ENCODE measurements at regions of chr5 and their contacts with region 1.

Region 1: DNA sequence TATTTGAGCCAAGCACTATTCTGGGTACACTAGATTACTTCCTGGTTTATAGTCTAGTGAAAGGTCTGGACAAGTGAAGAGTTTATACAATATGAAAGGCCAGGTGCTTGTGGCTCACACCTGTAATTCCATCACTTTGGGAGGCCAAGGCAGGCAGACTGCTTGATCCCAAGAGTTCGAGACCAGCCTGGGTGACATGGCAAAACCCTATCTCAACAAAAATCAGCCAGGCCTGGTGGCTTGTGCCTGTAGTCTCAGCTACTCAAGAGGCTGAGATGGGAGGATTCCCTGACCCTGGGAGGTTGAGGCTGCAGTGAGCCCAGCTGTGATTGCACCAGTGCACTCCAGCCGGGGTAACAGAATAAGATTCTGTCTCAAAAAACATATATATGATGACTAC is 9.5 kb upstream of the TXNDC15 start:
- DNase-seq: no peak
- H3K4me3 ChIP-seq: no peak overlapping the region
- H3K27ac ChIP-seq: no peak overlapping the region
- H3K4me1 ChIP-seq: no peaks in the 10 kb centered on the region
- H3K27me3 ChIP-seq: no peaks in the 10 kb centered on the region
- CTCF ChIP-seq: no peak
- EP300 ChIP-seq: no peak
- POLR2A ChIP-seq: no peak
- RAD21 ChIP-seq: no peak

Region 2: DNA sequence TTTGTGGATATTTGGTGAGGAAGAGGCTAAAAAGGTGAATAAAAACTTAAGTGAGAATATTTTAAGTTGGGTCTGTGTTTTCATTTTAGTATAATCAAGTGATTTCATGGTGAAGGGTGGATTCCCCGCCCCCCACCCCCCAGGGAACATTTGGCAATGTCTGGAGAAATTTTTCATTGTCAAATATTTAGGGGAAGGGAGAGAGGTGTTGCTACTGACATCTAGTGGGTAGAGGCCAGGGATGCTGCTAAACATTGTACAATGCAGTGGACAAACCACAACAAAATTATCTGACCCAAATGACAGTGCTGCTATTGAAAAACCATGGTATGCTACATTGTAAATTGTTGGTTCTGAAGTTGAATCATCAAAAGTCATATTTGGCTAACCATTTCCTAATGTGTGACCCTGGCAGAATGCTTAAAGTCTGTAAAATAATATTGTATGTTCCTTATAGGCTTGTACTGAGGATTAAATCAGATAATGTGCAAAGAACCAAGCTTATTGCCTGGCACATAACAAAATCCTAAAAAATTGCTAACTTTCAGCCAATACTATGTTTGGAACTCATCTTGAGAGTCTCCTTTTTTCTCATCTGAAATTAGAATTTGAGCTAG is 13.3 kb before region 1 on chr5:
- CTCF ChIA-PET with region 1: interaction called, 37 read pairs
- POLR2A ChIA-PET with region 1: interaction called, 6 read pairs
- DNase-seq: peak in 1 of 2 experiments; percentile 24
- H3K4me3 ChIP-seq: no peak overlapping the region
- H3K27ac ChIP-seq: no peak overlapping the region
- H3K4me1 ChIP-seq: no peaks in the 10 kb centered on the region
- H3K27me3 ChIP-seq: no peaks in the 10 kb centered on the region
- CTCF ChIP-seq: peak in 2 of 3 experiments; percentile 24 to 37; a peak in 2 of 4 replicates
- EP300 ChIP-seq: no peak
- POLR2A ChIP-seq: no peak
- RAD21 ChIP-seq: peak; percentile 14 to 28; a peak in 3 of 4 replicates

Measured in H1 (cell line).